Thyroid gland (tissue), 4 donors: ENCODE measurements at regions of chr2 and their contacts with region 1.

Region 1: DNA sequence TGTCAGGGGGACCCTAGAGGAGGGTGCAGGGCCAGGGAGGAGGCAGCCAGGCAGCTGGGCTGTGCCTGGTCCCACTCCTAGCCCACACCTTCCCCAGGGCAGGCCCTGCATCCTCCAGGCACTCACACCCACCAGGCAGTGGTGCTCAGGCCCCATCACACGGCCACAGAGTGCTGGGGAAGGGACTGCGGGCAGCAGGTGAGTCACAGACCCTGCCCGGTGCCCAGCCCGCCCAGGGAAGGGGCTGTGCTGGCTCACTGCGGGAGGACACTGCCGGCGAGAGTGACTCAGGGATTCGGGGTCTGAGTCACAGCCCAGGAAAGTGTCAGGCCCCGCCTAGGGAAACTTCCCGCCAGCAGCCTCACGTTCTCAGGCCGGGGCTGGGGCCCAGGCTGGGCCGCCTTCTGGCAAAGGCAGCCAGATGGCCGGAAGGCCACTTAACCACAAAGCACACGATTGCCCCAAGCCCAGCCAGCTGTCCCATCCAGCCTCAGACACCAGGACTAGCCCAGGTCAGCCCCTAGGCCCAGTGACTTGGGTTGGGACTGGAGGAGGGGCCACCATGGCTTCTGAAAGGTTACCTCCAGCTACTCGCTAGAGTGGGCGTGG is 42.2 kb downstream of the BIN1 start:
- DNase-seq: peak; percentile 59 to 65
- H3K4me3 ChIP-seq: no peak overlapping the region
- H3K27ac ChIP-seq: peak overlapping the region in 1 of 3 donors; percentile 48
- H3K4me1 ChIP-seq: peaks cover 0 to 40% of the 10 kb centered on the region in 2 donors
- H3K27me3 ChIP-seq: no peaks in the 10 kb centered on the region
- CTCF ChIP-seq: no peak
- POLR2A ChIP-seq: no peak

Region 2: GRCh38 chr2:127174136-127174535 is 109.4 kb after region 1 on chr2:
- intact Hi-C with region 1: loop called (anchors 10 kb)
- DNase-seq: no peak
- H3K4me3 ChIP-seq: no peak overlapping the region
- H3K27ac ChIP-seq: no peak overlapping the region
- H3K4me1 ChIP-seq: peaks cover 0 to 17% of the 10 kb centered on the region in 2 donors
- H3K27me3 ChIP-seq: no peaks in the 10 kb centered on the region
- CTCF ChIP-seq: peak in 2 of 6 experiments; percentile 6 to 31
- POLR2A ChIP-seq: no peak